Activated CD8-positive, alpha-beta T cell treated with anti-CD3 and anti-CD28 coated beads, Interleukin-2, amount 10 ng/mL, durations not matched to agents 7 days and 5 days (primary cell): ENCODE measurements at regions of chr1 and their contacts with region 1.

Region 1: DNA sequence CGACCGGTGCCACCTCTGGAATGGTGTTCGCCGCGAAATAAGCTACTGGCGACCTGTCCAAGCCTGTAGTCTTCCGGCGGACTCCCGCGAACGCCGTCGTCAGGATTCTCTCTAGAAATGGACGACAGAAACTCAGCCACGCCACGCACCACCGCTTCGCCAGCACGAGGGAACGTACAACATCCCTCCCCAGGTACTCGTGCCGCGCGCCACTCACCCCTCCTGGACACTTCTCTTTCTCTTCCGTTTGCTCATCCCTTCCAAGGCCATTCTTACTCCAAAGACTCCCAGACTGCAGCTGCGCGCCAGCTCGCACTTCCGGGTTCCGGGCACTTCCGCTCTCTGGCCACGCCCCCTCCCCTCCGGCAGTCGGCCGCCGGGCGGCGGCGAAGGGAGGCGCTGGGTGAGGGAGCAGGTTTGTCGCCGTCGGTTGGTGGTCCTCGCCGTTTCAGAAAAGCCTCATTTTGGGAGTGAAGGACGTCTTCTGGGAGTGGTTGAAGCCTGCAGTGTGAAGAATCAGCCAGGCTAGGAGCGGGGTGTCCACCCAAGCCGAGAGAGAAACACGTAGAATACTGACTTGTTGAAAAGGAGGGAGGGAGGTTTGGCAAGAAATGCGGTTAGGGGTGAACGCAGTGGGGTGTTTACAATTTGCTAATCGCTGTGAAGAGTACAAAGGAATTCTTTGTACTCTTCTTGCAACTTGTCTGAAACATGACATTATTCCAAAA is at the start of gene RBM34:
- DNase-seq: peak; percentile 94
- ATAC-seq: peak; percentile 92
- H3K4me3 Mint-ChIP-seq: peak within 1 kb of the TSS; percentile 97
- H3K27ac Mint-ChIP-seq: peak within 1 kb of the TSS; percentile 100
- H3K4me1 Mint-ChIP-seq: peaks cover 13% of the 10 kb centered on the region
- H3K27me3 Mint-ChIP-seq: no peaks in the 10 kb centered on the region
- total RNA-seq, gene RBM34: 115 to 117 TPM

Region 2: DNA sequence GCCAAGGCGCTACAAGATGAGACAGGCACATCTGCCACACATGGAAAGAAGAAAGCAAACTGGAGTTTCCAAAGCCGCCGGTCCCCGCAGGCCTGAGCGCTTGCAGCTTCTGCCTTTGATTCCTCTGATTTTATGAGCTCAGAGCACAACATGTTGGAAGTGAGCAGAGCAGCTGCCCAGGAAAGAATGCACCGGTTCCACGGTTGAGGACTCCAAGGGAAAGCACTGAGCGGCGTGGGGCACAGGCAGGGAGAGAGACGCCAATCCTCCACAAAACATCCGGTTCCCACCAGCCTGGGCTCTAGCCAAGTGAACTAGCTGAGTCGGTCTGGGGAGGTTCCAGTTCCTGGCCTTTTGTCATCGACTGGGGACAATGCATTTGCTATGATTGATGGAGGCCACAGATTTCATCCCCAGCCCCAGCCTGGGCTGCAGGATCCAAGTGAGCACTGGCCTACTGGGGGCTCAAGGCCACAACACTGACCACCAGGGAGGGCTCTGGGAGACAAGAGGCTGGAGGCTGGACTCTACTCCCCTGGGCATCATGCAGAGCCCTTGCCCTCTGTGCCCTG is 298.1 kb before region 1 on chr1:
- CTCF ChIA-PET with region 1: no interaction called
- POLR2A ChIA-PET with region 1: no interaction called
- DNase-seq: no peak
- ATAC-seq: no peak
- H3K4me3 Mint-ChIP-seq: no peak overlapping the region
- H3K27ac Mint-ChIP-seq: no peak overlapping the region
- H3K4me1 Mint-ChIP-seq: peaks cover 21% of the 10 kb centered on the region
- H3K27me3 Mint-ChIP-seq: no peaks in the 10 kb centered on the region

Region 3: DNA sequence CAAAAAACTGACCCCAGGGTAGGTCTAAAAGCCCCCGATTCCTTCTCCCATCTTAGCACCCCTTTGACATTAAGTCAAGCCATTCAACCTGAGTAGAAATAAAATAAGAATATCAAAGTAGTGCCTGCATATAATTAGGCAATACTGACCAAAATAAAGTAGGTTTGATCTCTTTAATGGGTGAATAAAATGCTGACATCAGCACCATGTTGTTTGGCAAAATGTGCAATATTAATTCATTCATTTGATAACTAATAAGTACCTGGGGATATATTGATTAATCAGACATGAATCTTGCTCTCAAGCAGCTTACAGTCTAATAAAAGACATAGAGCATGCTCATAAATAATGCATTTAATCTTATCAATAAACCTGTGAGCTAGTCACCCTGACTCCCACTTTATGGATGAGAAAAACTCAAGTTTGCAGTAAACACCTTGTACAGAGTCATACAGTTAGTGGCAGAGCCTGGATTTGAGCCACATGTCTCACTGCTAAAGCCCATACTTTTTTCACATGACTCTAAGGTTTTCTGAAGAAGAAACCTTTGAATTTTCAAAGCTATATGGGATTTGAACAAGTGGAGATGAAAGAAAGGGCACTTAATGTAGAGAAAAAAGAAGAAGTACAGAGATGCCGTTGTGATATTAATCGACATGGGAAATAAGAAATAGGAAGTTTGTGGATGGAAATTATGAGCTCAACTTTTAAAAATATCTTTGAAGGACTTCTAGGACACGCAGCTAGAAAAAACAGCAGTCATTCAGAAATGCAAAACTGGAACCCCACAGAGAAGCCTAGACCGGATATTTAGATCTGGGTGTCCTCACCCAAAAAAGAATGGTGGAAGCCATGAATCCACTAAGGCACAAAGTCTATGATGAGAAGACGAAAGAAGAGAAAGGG is 216.4 kb before region 1 on chr1:
- CTCF ChIA-PET with region 1: no interaction called
- POLR2A ChIA-PET with region 1: no interaction called
- DNase-seq: no peak
- ATAC-seq: no peak
- H3K4me3 Mint-ChIP-seq: no peak overlapping the region
- H3K27ac Mint-ChIP-seq: no peak overlapping the region
- H3K4me1 Mint-ChIP-seq: peaks cover 6% of the 10 kb centered on the region
- H3K27me3 Mint-ChIP-seq: no peaks in the 10 kb centered on the region

Region 4: GRCh38 chr1:235128456-235129328 is 32.4 kb before region 1 on chr1 and contains the start of gene TOMM20:
- CTCF ChIA-PET with region 1: interaction called, 5 read pairs
- POLR2A ChIA-PET with region 1: interaction called, 19 read pairs
- DNase-seq: peak; percentile 95
- ATAC-seq: peak; percentile 97
- H3K4me3 Mint-ChIP-seq: peak within 1 kb of the TSS; percentile 85
- H3K27ac Mint-ChIP-seq: peak within 1 kb of the TSS; percentile 99
- H3K4me1 Mint-ChIP-seq: peaks cover 36% of the 10 kb centered on the region
- H3K27me3 Mint-ChIP-seq: no peaks in the 10 kb centered on the region
- total RNA-seq, gene TOMM20: 72.2 to 81.7 TPM

Region 5: GRCh38 chr1:235151033-235151432 is 10.1 kb before region 1 on chr1:
- CTCF ChIA-PET with region 1: interaction called, 4 read pairs
- POLR2A ChIA-PET with region 1: interaction called, 11 read pairs
- DNase-seq: no peak
- ATAC-seq: peak; percentile 45
- H3K4me3 Mint-ChIP-seq: no peak overlapping the region
- H3K27ac Mint-ChIP-seq: no peak overlapping the region
- H3K4me1 Mint-ChIP-seq: peaks cover 16% of the 10 kb centered on the region
- H3K27me3 Mint-ChIP-seq: no peaks in the 10 kb centered on the region